T-cell (primary cell): ENCODE measurements at regions of chr7 and their contacts with region 1.

Region 1: GRCh38 chr7:66016129-66016457 is 34.1 kb upstream of the GUSB start:
- DNase-seq: no peak
- ATAC-seq: no peak
- H3K4me3 ChIP-seq: no peak overlapping the region
- H3K4me3 Mint-ChIP-seq: no peak overlapping the region
- H3K27ac ChIP-seq: no peak overlapping the region
- H3K27ac Mint-ChIP-seq: no peak overlapping the region
- H3K4me1 ChIP-seq: no peaks in the 10 kb centered on the region
- H3K4me1 Mint-ChIP-seq: no peaks in the 10 kb centered on the region
- H3K27me3 ChIP-seq: peaks cover 0 to 8% of the 10 kb centered on the region in 2 experiments
- H3K27me3 Mint-ChIP-seq: peaks cover 0 to 4% of the 10 kb centered on the region in 2 donors

Region 2: GRCh38 chr7:66140924-66141323 is 124.8 kb after region 1 on chr7:
- CTCF ChIA-PET with region 1: no interaction called
- POLR2A ChIA-PET with region 1: interaction called in 1 of 2 experiments, 11 read pairs
- DNase-seq: no peak
- ATAC-seq: no peak
- H3K4me3 ChIP-seq: no peak overlapping the region
- H3K4me3 Mint-ChIP-seq: no peak overlapping the region
- H3K27ac ChIP-seq: no peak overlapping the region
- H3K27ac Mint-ChIP-seq: no peak overlapping the region
- H3K4me1 ChIP-seq: no peaks in the 10 kb centered on the region
- H3K4me1 Mint-ChIP-seq: peaks cover 0 to 2% (median 0%) of the 10 kb centered on the region in 3 donors
- H3K27me3 ChIP-seq: no peaks in the 10 kb centered on the region
- H3K27me3 Mint-ChIP-seq: no peaks in the 10 kb centered on the region